ENCODE measurements at regions of chr2 and their contacts with region 1.

Region 1: DNA sequence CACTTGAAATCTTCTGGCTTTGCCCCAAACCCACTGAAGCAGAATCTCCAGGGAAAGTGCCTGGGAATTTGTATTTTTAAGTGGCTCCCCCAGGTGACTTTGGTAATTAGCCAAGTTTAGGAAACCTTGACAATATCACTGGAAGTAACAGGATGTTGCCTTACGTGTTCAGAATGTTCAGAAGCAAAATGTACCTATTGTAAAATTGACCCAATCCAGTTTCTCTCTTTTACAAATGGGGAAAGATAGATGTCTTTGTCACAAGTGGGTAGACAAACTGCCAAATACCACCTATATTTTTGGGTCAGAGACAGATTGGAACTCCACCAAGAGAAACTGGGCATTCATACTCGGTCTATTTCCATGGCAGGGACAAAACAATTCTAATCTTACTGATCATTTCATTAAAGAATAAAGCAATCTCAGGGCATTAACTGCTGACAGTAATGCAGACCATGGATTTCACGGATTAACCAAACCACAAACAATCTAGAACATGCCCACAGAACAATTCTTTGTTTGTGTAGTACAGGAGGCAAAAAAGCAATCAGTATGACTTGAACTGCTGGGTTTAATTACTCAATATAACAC is 255.8 kb downstream of the ERBB4 start:
- DNase-seq: no peak
- H3K4me3 ChIP-seq: no peak overlapping the region
- H3K27ac ChIP-seq: peak overlapping the region in 1 of 2 donors; percentile 52
- H3K4me1 ChIP-seq: peaks cover 0 to 16% of the 10 kb centered on the region in 2 donors
- H3K27me3 ChIP-seq: no peaks in the 10 kb centered on the region
- CTCF ChIP-seq: no peak

Region 2: GRCh38 chr2:212254339-212254738 is 28.4 kb before region 1 on chr2:
- intact Hi-C with region 1: no loop called
- DNase-seq: no peak
- H3K4me3 ChIP-seq: no peak overlapping the region
- H3K27ac ChIP-seq: no peak overlapping the region
- H3K4me1 ChIP-seq: no peaks in the 10 kb centered on the region
- H3K27me3 ChIP-seq: no peaks in the 10 kb centered on the region
- CTCF ChIP-seq: no peak

Region 3: GRCh38 chr2:212328136-212328535 is 45.4 kb after region 1 on chr2:
- intact Hi-C with region 1: loop called (anchors 5 kb)
- DNase-seq: no peak
- H3K4me3 ChIP-seq: no peak overlapping the region
- H3K27ac ChIP-seq: no peak overlapping the region
- H3K4me1 ChIP-seq: peaks cover 0 to 15% of the 10 kb centered on the region in 2 donors
- H3K27me3 ChIP-seq: no peaks in the 10 kb centered on the region
- CTCF ChIP-seq: no peak